Endothelial cell of umbilical vein (primary cell): ENCODE measurements at regions of chr2 and their contacts with region 1.

Region 1: GRCh38 chr2:164782323-164782722 is 59.3 kb downstream of the COBLL1 start:
- DNase-seq: peak; percentile 54
- H3K4me3 ChIP-seq: no peak overlapping the region
- H3K27ac ChIP-seq: no peak overlapping the region
- H3K4me1 ChIP-seq: peaks cover 42% of the 10 kb centered on the region
- H3K27me3 ChIP-seq: no peaks in the 10 kb centered on the region
- CTCF ChIP-seq: no peak
- POLR2A ChIP-seq: no peak

Region 2: GRCh38 chr2:164737612-164738081 is 44.7 kb before region 1 on chr2:
- CTCF ChIA-PET with region 1: interaction called, 3 read pairs
- POLR2A ChIA-PET with region 1: no interaction called
- dilution Hi-C with region 1: no loop called
- intact Hi-C with region 1: loop called (anchors 1 kb)
- DNase-seq: peak; percentile 82
- H3K4me3 ChIP-seq: no peak overlapping the region
- H3K27ac ChIP-seq: no peak overlapping the region
- H3K4me1 ChIP-seq: peaks cover 8% of the 10 kb centered on the region
- H3K27me3 ChIP-seq: no peaks in the 10 kb centered on the region
- CTCF ChIP-seq: peak; percentile 48 to 61
- POLR2A ChIP-seq: no peak

Region 3: GRCh38 chr2:164794432-164795231 is 12.3 kb after region 1 on chr2:
- CTCF ChIA-PET with region 1: interaction called, 4 read pairs
- POLR2A ChIA-PET with region 1: interaction called, 4 read pairs
- dilution Hi-C with region 1: no loop called
- intact Hi-C with region 1: loop called (anchors 1 kb)
- DNase-seq: peak; percentile 94
- H3K4me3 ChIP-seq: peak overlapping the region in 1 of 3 experiments; percentile 22
- H3K27ac ChIP-seq: peak overlapping the region; percentile 45
- H3K4me1 ChIP-seq: peaks cover 10% of the 10 kb centered on the region
- H3K27me3 ChIP-seq: no peaks in the 10 kb centered on the region
- CTCF ChIP-seq: no peak
- POLR2A ChIP-seq: no peak

Region 4: DNA sequence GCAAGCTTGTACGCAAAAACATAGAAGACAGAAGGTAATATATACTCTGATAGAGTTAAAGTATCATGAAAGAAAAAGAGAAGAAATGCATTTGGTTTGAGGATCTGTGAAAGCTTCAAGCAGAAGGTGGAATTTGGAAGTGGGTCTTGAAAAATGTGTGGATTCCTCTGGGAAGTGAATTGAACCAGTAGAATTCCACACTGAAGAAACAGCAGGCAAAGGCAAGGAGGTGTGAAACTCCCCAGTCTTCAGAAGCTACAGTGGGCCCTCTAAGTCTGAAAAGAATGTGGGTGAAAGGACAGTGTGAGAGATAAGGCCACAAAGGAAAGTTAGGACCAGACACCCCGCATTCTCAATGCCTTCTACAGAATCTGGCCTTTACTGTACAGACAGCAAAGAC is 33.7 kb after region 1 on chr2:
- CTCF ChIA-PET with region 1: no interaction called
- POLR2A ChIA-PET with region 1: no interaction called
- dilution Hi-C with region 1: no loop called
- intact Hi-C with region 1: no loop called
- DNase-seq: no peak
- H3K4me3 ChIP-seq: no peak overlapping the region
- H3K27ac ChIP-seq: no peak overlapping the region
- H3K4me1 ChIP-seq: no peaks in the 10 kb centered on the region
- H3K27me3 ChIP-seq: no peaks in the 10 kb centered on the region
- CTCF ChIP-seq: no peak
- POLR2A ChIP-seq: no peak

Region 5: DNA sequence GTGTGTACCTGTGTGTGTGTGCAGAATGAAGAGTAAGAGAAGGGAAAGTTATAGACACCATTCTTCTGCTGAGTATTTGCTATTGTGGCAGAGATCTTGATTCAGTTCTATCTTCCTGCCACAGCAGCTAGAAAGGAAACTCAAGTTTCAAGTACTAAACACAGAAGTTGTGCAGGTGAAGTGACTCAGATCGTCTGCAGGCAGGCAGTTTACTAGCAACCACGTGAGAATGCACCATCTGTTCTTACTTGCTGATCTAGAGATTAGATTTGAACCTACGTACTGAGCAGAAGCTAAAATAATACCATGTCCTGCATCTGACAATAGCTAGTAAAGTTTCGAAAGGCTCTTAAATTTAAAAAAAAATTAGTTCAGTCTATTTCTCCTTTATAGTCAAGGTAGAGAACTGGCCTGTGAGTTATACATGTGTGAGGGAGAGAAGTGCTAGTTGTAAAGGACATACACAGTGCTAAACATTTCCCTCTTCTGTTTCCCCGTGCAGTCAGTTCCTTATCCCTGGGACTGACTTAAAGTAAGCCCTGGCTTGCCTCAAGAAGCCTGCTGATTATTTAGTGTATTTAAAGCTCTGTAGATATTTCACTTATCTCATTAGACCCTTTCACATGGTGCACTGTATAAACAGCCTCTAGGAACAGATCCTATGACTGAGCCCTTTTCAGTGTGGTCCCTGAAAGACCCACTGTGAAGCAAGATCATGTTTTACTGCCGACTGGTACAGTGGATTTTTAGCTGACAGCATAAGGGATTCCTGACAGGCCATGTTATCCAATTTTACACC is 128.0 kb after region 1 on chr2:
- CTCF ChIA-PET with region 1: interaction called, 5 read pairs
- POLR2A ChIA-PET with region 1: no interaction called
- dilution Hi-C with region 1: no loop called
- intact Hi-C with region 1: loop called (anchors 1 kb)
- DNase-seq: peak; percentile 88
- H3K4me3 ChIP-seq: no peak overlapping the region
- H3K27ac ChIP-seq: peak overlapping the region; percentile 38
- H3K4me1 ChIP-seq: peaks cover 45% of the 10 kb centered on the region
- H3K27me3 ChIP-seq: no peaks in the 10 kb centered on the region
- CTCF ChIP-seq: no peak
- POLR2A ChIP-seq: no peak

Region 6: DNA sequence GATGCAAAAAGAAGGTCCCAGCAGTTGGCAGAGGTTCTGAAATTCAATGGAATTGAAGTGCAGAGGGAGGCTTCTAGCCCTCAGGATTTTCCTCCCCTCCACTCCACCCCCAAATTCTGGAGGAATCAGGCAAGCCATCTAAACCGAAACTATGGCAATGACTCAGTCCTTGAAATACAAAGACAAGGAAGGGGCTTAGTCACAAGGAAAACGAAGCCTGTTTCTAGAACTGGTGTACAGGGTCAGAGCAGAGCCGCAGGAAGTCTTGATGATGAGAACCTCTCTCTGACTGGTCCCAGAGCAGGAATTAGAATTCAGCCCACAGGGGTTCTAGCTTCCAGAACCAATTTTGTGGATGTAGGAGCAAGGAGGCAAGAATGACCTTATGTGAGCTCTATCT is 1457.2 kb after region 1 on chr2:
- CTCF ChIA-PET with region 1: no interaction called
- POLR2A ChIA-PET with region 1: no interaction called
- dilution Hi-C with region 1: no loop called
- intact Hi-C with region 1: loop called (anchors 10 kb)
- DNase-seq: peak; percentile 92
- H3K4me3 ChIP-seq: no peak overlapping the region
- H3K27ac ChIP-seq: peak overlapping the region; percentile 89
- H3K4me1 ChIP-seq: peaks cover 35% of the 10 kb centered on the region
- H3K27me3 ChIP-seq: no peaks in the 10 kb centered on the region
- CTCF ChIP-seq: no peak
- POLR2A ChIP-seq: peak; percentile 56